WTC11 (cell line): ENCODE measurements at regions of chr1 and their contacts with region 1.

Region 1: GRCh38 chr1:209549443-209550205 is 33.9 kb upstream of the CAMK1G start:
- DNase-seq: peak; percentile 50
- ATAC-seq: peak; percentile 85
- H3K4me3 Mint-ChIP-seq: peak overlapping the region; percentile 54
- H3K27ac Mint-ChIP-seq: no peak overlapping the region
- H3K4me1 Mint-ChIP-seq: peaks cover 36% of the 10 kb centered on the region
- H3K27me3 Mint-ChIP-seq: peaks cover 55% of the 10 kb centered on the region
- CTCF ChIP-seq: no peak

Region 2: GRCh38 chr1:209534496-209535250 is 15.0 kb before region 1 on chr1:
- CTCF ChIA-PET with region 1: interaction called, 32 read pairs
- POLR2A ChIA-PET with region 1: no interaction called
- DNase-seq: no peak
- ATAC-seq: peak; percentile 78
- H3K4me3 Mint-ChIP-seq: no peak overlapping the region
- H3K27ac Mint-ChIP-seq: no peak overlapping the region
- H3K4me1 Mint-ChIP-seq: peaks cover 23% of the 10 kb centered on the region
- H3K27me3 Mint-ChIP-seq: peaks cover 35% of the 10 kb centered on the region
- CTCF ChIP-seq: no peak